Endothelial cell of umbilical vein (primary cell): ENCODE measurements at regions of chr20 and their contacts with region 1.

Region 1: DNA sequence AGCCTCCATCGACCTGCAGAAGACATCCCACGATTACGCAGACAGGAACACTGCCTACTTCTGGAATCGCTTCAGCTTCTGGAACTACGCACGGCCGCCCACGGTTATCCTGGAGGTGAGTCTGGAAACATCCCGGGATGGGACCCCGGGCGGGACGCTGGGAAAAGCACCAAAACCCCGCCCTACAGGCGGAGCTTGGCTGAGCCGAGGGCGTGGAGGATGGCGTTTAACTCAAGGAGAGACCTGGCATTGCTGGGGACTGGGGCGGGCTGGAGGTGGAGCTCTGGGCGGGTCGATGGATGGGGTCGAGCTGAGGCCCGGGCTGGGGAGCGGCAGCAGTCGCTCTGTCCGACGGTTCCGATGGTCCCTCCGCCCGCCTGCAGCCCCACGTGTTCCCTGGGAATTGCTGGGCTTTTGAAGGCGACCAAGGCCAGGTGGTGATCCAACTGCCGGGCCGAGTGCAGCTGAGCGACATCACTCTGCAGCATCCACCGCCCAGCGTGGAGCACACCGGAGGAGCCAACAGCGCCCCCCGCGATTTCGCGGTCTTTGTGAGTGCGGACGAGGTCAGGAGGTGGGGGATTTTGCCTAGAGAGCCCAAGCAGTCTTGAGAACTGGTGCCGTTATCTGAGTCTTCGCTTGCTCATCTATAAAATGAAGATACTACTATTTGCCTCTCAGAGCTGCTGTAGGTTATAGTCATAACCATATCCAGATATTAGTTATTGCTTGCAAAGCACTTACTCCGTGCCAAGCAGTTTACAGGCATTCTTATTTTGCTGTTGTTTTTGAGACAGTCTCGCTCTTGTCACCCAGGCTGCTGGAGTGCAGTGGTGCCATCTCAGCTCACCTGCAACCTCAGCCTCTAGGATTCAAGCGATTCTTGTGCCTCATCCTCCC is 3.8 kb downstream of the SPAG4 start:
- DNase-seq: peak; percentile 88
- H3K4me3 ChIP-seq: peak overlapping the region in 2 of 3 experiments; percentile 36 to 54
- H3K27ac ChIP-seq: no peak overlapping the region
- H3K4me1 ChIP-seq: peaks cover 25% of the 10 kb centered on the region
- H3K27me3 ChIP-seq: no peaks in the 10 kb centered on the region
- CTCF ChIP-seq: peak; percentile 58 to 65
- POLR2A ChIP-seq: peak; percentile 59

Region 2: GRCh38 chr20:35171753-35172433 is 447.6 kb before region 1 on chr20 and contains the start of gene PROCR:
- CTCF ChIA-PET with region 1: no interaction called
- POLR2A ChIA-PET with region 1: no interaction called
- dilution Hi-C with region 1: no loop called
- intact Hi-C with region 1: loop called (anchors 5 kb)
- DNase-seq: peak; percentile 98
- H3K4me3 ChIP-seq: peak within 1 kb of the TSS; percentile 70 to 93 (median 80)
- H3K27ac ChIP-seq: peak within 1 kb of the TSS; percentile 79
- H3K4me1 ChIP-seq: peaks cover 37% of the 10 kb centered on the region
- H3K27me3 ChIP-seq: no peaks in the 10 kb centered on the region
- CTCF ChIP-seq: no peak
- POLR2A ChIP-seq: peak; percentile 98
- total RNA-seq, gene PROCR: 228 and 251 TPM in 2 replicates

Region 3: GRCh38 chr20:35511814-35512420 is 107.5 kb before region 1 on chr20:
- CTCF ChIA-PET with region 1: no interaction called
- POLR2A ChIA-PET with region 1: no interaction called
- dilution Hi-C with region 1: no loop called
- intact Hi-C with region 1: loop called (anchors 10 kb)
- DNase-seq: peak; percentile 56
- H3K4me3 ChIP-seq: no peak overlapping the region
- H3K27ac ChIP-seq: no peak overlapping the region
- H3K4me1 ChIP-seq: no peaks in the 10 kb centered on the region
- H3K27me3 ChIP-seq: no peaks in the 10 kb centered on the region
- CTCF ChIP-seq: peak; percentile 41 to 52
- POLR2A ChIP-seq: no peak

Region 4: DNA sequence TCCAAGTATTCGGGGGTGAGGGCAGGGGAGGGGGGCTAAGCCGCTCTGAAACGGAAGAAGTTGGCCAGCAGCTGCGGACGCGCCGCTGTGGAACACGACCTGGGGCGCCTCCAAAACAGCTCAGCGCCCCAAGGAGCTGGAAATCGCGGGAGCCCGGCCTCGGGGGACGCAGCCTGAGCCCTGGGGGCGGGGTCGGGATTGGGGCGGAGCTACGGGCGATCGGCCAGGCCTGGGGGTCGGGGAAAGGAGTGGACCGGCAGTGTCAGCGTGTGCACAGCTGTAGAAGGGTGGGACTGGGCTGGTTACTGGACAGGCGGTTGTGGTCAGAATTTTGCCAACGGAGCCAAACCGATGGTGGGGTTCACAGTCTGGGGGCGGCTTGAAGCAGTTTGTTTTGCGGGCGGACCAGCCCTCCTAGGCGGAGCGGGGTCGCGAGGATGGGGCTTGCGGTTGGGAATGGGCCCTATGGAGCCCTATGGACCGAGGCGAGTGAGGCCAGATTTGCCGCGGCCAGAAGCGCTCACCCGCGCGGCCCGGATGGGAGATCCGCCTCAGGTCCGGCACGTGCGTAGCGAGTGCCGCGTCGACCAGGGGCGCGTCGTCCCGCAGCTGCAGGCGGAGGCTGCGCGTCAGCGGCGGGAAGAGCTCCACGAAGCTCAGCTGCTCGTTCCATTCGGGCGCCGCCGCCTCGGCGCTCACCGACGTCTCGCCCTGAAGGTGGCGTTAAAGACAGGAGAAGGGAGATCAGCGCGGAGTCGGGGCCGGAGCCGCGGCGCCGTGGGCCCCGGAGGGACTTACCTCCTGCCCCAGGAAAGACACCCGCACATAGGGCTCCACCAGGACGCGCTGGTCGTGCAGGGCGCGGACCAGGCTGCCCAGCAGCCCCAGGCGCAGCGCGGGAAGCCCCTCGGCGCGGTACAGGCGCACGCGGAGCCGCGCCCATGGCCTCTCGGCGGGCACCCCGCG is 18.2 kb before region 1 on chr20:
- CTCF ChIA-PET with region 1: interaction called, 28 read pairs
- POLR2A ChIA-PET with region 1: interaction called, 5 read pairs
- dilution Hi-C with region 1: no loop called
- intact Hi-C with region 1: loop called (anchors 2 kb)
- DNase-seq: peak; percentile 79
- H3K4me3 ChIP-seq: peak overlapping the region; percentile 1 to 21 (median 2)
- H3K27ac ChIP-seq: no peak overlapping the region
- H3K4me1 ChIP-seq: peaks cover 8% of the 10 kb centered on the region
- H3K27me3 ChIP-seq: peaks cover 13 to 15% of the 10 kb centered on the region in 2 experiments
- CTCF ChIP-seq: peak; percentile 26 to 52
- POLR2A ChIP-seq: no peak

Region 5: GRCh38 chr20:35643045-35643444 is 23.6 kb after region 1 on chr20:
- CTCF ChIA-PET with region 1: no interaction called
- POLR2A ChIA-PET with region 1: no interaction called
- dilution Hi-C with region 1: no loop called
- intact Hi-C with region 1: no loop called
- DNase-seq: no peak
- H3K4me3 ChIP-seq: no peak overlapping the region
- H3K27ac ChIP-seq: no peak overlapping the region
- H3K4me1 ChIP-seq: no peaks in the 10 kb centered on the region
- H3K27me3 ChIP-seq: no peaks in the 10 kb centered on the region
- CTCF ChIP-seq: no peak
- POLR2A ChIP-seq: no peak

Region 6: GRCh38 chr20:35664544-35665221 is 45.2 kb after region 1 on chr20 and contains the starts of genes CPNE1 and RBM12:
- CTCF ChIA-PET with region 1: interaction called, 8 read pairs
- POLR2A ChIA-PET with region 1: no interaction called
- dilution Hi-C with region 1: no loop called
- intact Hi-C with region 1: loop called (anchors 1 kb)
- DNase-seq: peak; percentile 94
- H3K4me3 ChIP-seq: peak within 1 kb of the TSS; percentile 13 to 81 (median 78)
- H3K27ac ChIP-seq: peak within 1 kb of the TSS; percentile 33
- H3K4me1 ChIP-seq: peaks cover 19% of the 10 kb centered on the region
- H3K27me3 ChIP-seq: no peaks in the 10 kb centered on the region
- CTCF ChIP-seq: peak in 1 of 2 donors; percentile 6
- POLR2A ChIP-seq: peak; percentile 95
- total RNA-seq, gene CPNE1: 239 and 244 TPM in 2 replicates
- total RNA-seq, gene RBM12: 98.0 and 105 TPM in 2 replicates

Region 7: GRCh38 chr20:35741892-35742740 is 122.7 kb after region 1 on chr20 and contains the start of gene RBM39:
- CTCF ChIA-PET with region 1: interaction called, 3 read pairs
- POLR2A ChIA-PET with region 1: interaction called, 5 read pairs
- dilution Hi-C with region 1: no loop called
- intact Hi-C with region 1: loop called (anchors 2 kb)
- DNase-seq: peak; percentile 100
- H3K4me3 ChIP-seq: peak within 1 kb of the TSS; percentile 97 to 100 (median 99)
- H3K27ac ChIP-seq: peak within 1 kb of the TSS; percentile 97
- H3K4me1 ChIP-seq: peaks cover 39% of the 10 kb centered on the region
- H3K27me3 ChIP-seq: no peaks in the 10 kb centered on the region
- CTCF ChIP-seq: peak; percentile 21 to 58
- POLR2A ChIP-seq: peak; percentile 89
- total RNA-seq, gene RBM39: 291 and 309 TPM in 2 replicates